ENCODE measurements at regions of chr4 and their contacts with region 1.

Region 1: DNA sequence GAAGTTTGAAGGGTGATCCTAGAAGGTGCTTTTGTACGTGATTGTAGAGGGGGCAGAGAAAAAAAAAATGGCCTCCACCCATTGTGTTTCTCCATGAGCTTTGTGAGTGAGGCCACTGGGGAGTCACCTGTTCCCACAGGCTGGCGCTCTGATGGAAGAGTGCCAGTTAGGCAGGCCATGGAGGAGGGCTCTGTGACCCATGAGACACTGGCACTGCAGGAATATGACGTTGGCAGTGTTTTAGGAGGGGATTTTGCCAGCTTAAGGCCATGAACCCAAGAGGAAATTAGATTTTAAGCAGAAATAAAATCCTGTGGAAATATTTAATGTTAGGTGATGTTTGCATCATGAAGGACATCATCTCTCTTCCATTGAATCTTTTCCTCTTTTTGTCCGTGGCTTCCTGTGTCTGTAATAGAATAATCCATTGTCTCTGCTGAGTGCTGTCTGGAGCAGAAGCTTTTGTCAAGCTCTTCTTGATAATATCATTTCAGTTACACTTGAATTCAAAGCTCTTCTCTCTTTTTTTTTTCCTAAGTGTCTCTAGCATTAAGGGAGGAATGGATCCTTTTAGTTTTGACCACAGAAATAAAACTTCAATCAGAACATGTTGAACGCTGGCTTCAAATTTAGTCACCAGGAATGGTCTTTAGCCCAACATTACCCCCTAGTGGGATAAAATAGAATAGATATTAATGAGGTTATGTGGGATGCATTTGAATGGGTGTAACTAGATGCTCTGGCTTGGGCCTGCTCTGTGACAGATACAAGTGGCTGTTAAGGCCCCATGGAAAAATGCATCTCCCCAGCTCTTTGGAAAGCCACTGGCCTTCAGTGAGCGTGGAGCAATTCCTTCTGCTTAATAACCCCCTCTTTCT is 41.0 kb upstream of the UCP1 start:
- DNase-seq: no peak
- H3K4me3 ChIP-seq: no peak overlapping the region
- CTCF ChIP-seq: peak; percentile 33

Region 2: DNA sequence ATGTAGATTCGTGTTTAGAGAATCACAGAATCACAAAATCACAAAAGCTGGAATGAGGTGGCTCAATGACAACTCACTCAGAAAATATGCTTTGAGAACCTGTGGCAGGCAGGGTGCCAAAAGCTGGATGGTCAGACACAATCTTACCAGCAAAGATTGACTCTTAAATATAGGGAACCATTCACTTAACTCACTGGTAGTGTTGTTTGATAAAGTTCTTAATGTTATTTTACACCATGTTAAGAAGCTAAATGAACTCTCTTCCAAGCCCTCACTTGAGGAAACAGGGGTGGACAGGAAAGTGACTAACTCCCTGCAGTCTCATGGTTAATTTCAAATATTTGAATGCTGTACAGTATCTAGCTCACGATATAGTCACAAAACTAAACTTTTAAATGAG is 242.0 kb before region 1 on chr4:
- CTCF ChIA-PET with region 1: interaction called, 103 read pairs
- POLR2A ChIA-PET with region 1: no interaction called
- DNase-seq: no peak
- H3K4me3 ChIP-seq: no peak overlapping the region
- CTCF ChIP-seq: no peak

Region 3: GRCh38 chr4:140556372-140557085 is 53.3 kb before region 1 on chr4:
- CTCF ChIA-PET with region 1: no interaction called
- POLR2A ChIA-PET with region 1: no interaction called
- DNase-seq: no peak
- H3K4me3 ChIP-seq: no peak overlapping the region
- CTCF ChIP-seq: no peak

Region 4: DNA sequence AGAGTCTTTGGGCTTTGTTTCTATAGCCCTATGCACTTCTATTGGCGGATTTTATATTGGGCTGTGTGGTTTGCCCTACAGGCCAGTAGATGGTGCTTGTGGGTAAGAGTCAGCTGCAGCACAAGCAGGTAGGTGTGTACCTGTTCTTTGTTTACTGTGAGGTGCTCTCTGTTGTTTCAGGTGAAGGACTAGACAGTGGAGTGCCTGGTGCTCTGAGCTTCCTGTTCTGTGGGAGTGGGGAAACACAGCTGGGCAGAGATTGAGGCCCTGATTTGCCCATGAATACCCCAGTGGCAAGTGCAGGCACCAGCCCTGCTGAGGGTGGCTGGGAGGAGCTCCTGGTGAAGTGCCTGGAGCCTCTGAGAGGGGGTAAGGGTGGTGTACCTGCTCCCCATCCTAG is 14.7 kb before region 1 on chr4:
- CTCF ChIA-PET with region 1: interaction called, 42 read pairs
- POLR2A ChIA-PET with region 1: no interaction called
- DNase-seq: no peak
- H3K4me3 ChIP-seq: no peak overlapping the region
- CTCF ChIP-seq: no peak

Region 5: GRCh38 chr4:140621161-140621560 is 11.4 kb after region 1 on chr4:
- CTCF ChIA-PET with region 1: interaction called, 23 read pairs
- POLR2A ChIA-PET with region 1: no interaction called
- DNase-seq: no peak
- H3K4me3 ChIP-seq: no peak overlapping the region
- CTCF ChIP-seq: no peak

Measured in AG04449 (cell line).